ENCODE measurements at regions of chr4 and their contacts with region 1.

Region 1: GRCh38 chr4:77075869-77076799 is at the start of gene CCNI:
- DNase-seq: peak; percentile 100
- ATAC-seq: peak; percentile 75
- H3K4me3 ChIP-seq: peak within 1 kb of the TSS; percentile 68 to 98 (median 81)
- H3K4me3 Mint-ChIP-seq: no peak within 1 kb of the TSS
- H3K27ac ChIP-seq: peak within 1 kb of the TSS; percentile 97 to 100
- H3K27ac Mint-ChIP-seq: peak within 1 kb of the TSS; percentile 100
- H3K4me1 ChIP-seq: peaks cover 48 to 52% of the 10 kb centered on the region in 2 donors
- H3K4me1 Mint-ChIP-seq: peaks cover 46% of the 10 kb centered on the region
- H3K27me3 ChIP-seq: no peaks in the 10 kb centered on the region
- H3K27me3 Mint-ChIP-seq: no peaks in the 10 kb centered on the region
- CTCF ChIP-seq: no peak
- total RNA-seq, gene CCNI: 314 and 328 TPM in 2 replicates

Region 2: DNA sequence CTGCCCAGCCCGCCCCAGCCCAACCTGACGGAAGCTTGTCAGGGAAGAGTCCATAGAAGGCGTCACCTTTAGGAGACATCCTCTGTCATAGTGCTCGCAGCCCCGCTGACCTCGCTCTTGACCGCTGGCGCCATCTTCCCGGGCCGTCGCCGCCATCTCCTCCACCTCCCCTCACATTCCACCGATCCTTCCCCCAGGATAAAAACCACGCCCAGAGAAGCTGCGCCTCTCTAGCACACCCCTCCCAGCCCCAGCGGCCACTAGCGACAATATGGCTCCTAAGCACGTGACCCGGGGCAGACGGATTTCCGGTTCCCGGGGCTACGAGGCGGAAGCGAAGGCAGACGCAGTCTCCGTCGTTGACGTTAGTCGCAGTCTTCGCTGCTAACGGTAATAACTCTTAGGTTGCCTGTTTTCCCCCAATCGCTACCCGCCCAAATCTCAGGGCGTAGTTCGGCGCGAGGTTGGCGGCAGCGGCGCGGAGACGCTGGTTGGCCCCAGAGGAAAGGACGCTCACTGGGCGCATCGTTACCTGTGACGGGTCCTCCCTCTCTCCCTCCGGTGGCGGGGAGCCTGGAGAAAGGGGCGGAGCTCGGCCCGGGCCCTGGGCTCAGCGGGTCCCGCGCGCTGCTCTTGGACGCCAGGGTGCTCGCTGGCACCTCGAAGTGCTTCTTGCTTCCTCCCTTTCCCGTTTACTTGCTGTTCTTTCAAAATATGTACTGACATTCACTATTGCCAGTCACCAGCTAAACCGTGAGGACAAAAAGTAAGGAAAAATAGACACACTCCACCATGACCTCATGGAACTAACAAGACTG is 1561.8 kb before region 1 on chr4 and contains the starts of genes RCHY1 and THAP6:
- CTCF ChIA-PET with region 1: no interaction called
- POLR2A ChIA-PET with region 1: no interaction called
- intact Hi-C with region 1: loop called (anchors 5 kb)
- DNase-seq: peak; percentile 96
- ATAC-seq: peak; percentile 87
- H3K4me3 ChIP-seq: peak within 1 kb of the TSS; percentile 76 to 94 (median 85)
- H3K4me3 Mint-ChIP-seq: no peak within 1 kb of the TSS
- H3K27ac ChIP-seq: peak within 1 kb of the TSS; percentile 93 to 96
- H3K27ac Mint-ChIP-seq: peak within 1 kb of the TSS; percentile 97
- H3K4me1 ChIP-seq: peaks cover 29 to 32% of the 10 kb centered on the region in 2 donors
- H3K4me1 Mint-ChIP-seq: peaks cover 36% of the 10 kb centered on the region
- H3K27me3 ChIP-seq: no peaks in the 10 kb centered on the region
- H3K27me3 Mint-ChIP-seq: no peaks in the 10 kb centered on the region
- CTCF ChIP-seq: peak; percentile 7
- total RNA-seq, gene RCHY1: 33.3 and 34.5 TPM in 2 replicates
- total RNA-seq, gene THAP6: 34.5 and 38.3 TPM in 2 replicates

Region 3: GRCh38 chr4:76219299-76220055 is 856.7 kb before region 1 on chr4:
- CTCF ChIA-PET with region 1: no interaction called
- POLR2A ChIA-PET with region 1: no interaction called
- intact Hi-C with region 1: loop called (anchors 2 kb)
- DNase-seq: no peak
- ATAC-seq: no peak
- H3K4me3 ChIP-seq: no peak overlapping the region
- H3K4me3 Mint-ChIP-seq: no peak overlapping the region
- H3K27ac ChIP-seq: no peak overlapping the region
- H3K27ac Mint-ChIP-seq: no peak overlapping the region
- H3K4me1 ChIP-seq: peaks cover 7 to 8% of the 10 kb centered on the region in 2 donors
- H3K4me1 Mint-ChIP-seq: peaks cover 3% of the 10 kb centered on the region
- H3K27me3 ChIP-seq: no peaks in the 10 kb centered on the region
- H3K27me3 Mint-ChIP-seq: no peaks in the 10 kb centered on the region
- CTCF ChIP-seq: no peak

Region 4: GRCh38 chr4:77052352-77052751 is 23.8 kb before region 1 on chr4:
- CTCF ChIA-PET with region 1: interaction called, 12 read pairs
- POLR2A ChIA-PET with region 1: interaction called, 3 read pairs
- intact Hi-C with region 1: loop called (anchors 2 kb)
- DNase-seq: peak; percentile 70
- ATAC-seq: no peak
- H3K4me3 ChIP-seq: no peak overlapping the region
- H3K4me3 Mint-ChIP-seq: no peak overlapping the region
- H3K27ac ChIP-seq: no peak overlapping the region
- H3K27ac Mint-ChIP-seq: peak overlapping the region; percentile 59
- H3K4me1 ChIP-seq: no peaks in the 10 kb centered on the region
- H3K4me1 Mint-ChIP-seq: no peaks in the 10 kb centered on the region
- H3K27me3 ChIP-seq: no peaks in the 10 kb centered on the region
- H3K27me3 Mint-ChIP-seq: no peaks in the 10 kb centered on the region
- CTCF ChIP-seq: peak; percentile 61

Region 5: GRCh38 chr4:77126809-77127208 is 50.7 kb after region 1 on chr4:
- CTCF ChIA-PET with region 1: no interaction called
- POLR2A ChIA-PET with region 1: interaction called, 5 read pairs
- intact Hi-C with region 1: loop called (anchors 2 kb)
- DNase-seq: peak; percentile 72
- ATAC-seq: peak; percentile 83
- H3K4me3 ChIP-seq: peak overlapping the region in 1 of 5 experiments; percentile 31
- H3K4me3 Mint-ChIP-seq: peak overlapping the region; percentile 59
- H3K27ac ChIP-seq: peak overlapping the region; percentile 81 to 90
- H3K27ac Mint-ChIP-seq: peak overlapping the region; percentile 96
- H3K4me1 ChIP-seq: peaks cover 52 to 66% of the 10 kb centered on the region in 2 donors
- H3K4me1 Mint-ChIP-seq: peaks cover 68% of the 10 kb centered on the region
- H3K27me3 ChIP-seq: no peaks in the 10 kb centered on the region
- H3K27me3 Mint-ChIP-seq: no peaks in the 10 kb centered on the region
- CTCF ChIP-seq: no peak

Region 6: DNA sequence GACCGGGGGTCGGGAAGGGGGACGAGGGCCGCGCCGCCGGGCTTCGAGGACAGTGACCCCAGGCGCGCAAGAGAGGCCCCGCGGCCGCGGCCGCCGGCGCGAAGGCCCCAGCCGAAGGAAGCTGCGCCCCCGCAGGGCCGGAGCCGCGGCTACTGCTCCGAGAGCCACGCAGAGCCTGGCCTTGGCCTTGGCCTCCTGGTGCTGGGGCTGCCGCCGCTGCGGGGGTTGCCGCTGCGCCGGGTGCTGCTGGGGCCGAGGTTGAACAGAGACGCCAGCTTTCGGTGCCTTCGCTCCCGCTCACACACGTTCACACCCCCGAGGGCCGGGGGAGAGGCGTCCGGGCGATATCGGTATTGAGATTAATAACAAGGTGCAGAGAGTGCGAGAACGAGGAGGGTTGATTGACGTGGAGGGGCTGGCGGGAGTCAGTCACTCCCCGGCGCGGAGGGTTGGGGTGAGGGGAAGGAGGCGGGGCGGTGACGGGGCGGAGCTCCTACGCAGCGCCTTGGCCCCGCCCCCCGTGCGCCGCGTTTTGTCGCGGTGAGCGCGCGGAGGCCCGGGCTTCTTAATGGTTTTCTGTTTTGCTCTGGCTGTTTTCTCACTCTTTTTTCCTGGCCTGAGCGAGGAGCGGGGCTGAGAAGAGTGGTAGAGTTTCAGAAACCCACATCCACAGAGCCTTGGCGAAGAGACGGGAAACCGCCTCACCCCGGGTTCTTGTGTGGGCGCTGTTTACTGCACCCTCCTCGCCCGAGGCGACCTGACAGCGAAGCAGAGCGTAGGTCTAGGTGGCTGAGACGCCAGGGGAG is 743.9 kb after region 1 on chr4:
- CTCF ChIA-PET with region 1: no interaction called
- POLR2A ChIA-PET with region 1: no interaction called
- intact Hi-C with region 1: loop called (anchors 2 kb)
- DNase-seq: peak; percentile 95
- ATAC-seq: peak; percentile 75
- H3K4me3 ChIP-seq: peak overlapping the region; percentile 74 to 98 (median 88)
- H3K4me3 Mint-ChIP-seq: peak overlapping the region; percentile 98
- H3K27ac ChIP-seq: peak overlapping the region; percentile 94 to 99
- H3K27ac Mint-ChIP-seq: peak overlapping the region; percentile 99
- H3K4me1 ChIP-seq: peaks cover 42 to 45% of the 10 kb centered on the region in 2 donors
- H3K4me1 Mint-ChIP-seq: peaks cover 49% of the 10 kb centered on the region
- H3K27me3 ChIP-seq: no peaks in the 10 kb centered on the region
- H3K27me3 Mint-ChIP-seq: no peaks in the 10 kb centered on the region
- CTCF ChIP-seq: no peak

Measured in B cell (primary cell).